Activated CD4-positive, alpha-beta T cell treated with anti-CD3 and anti-CD28 coated beads for 36 hours (primary cell): ENCODE measurements at regions of chr2 and their contacts with region 1.

Region 1: DNA sequence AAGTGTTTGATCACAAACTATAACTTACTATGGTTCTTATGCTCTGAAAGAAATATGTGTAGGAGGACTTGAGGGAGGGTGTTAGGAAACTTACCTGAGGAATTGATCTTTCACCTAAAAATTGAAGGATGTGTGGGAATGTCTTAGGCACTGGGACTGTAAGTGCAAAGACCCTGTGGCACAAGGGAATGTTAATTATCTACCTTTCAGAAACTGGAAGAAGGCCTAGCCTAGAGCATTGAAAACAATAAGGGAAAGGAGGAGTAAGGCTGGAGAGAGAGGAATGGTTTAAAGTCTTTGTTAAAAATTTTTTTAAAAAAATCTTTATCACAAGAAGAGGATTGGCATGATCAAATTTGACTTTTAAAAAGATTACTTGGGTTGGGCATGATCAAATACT is 7.9 kb downstream of the AFTPH start:
- DNase-seq: no peak
- ATAC-seq: no peak
- H3K4me3 Mint-ChIP-seq: no peak overlapping the region
- H3K27ac Mint-ChIP-seq: no peak overlapping the region
- H3K4me1 Mint-ChIP-seq: peaks cover 67% of the 10 kb centered on the region
- H3K27me3 Mint-ChIP-seq: no peaks in the 10 kb centered on the region

Region 2: GRCh38 chr2:64482765-64483504 is 49.1 kb before region 1 on chr2:
- CTCF ChIA-PET with region 1: interaction called, 3 read pairs
- POLR2A ChIA-PET with region 1: interaction called, 12 read pairs
- intact Hi-C with region 1: no loop called
- DNase-seq: peak; percentile 20
- ATAC-seq: no peak
- H3K4me3 Mint-ChIP-seq: no peak overlapping the region
- H3K27ac Mint-ChIP-seq: no peak overlapping the region
- H3K4me1 Mint-ChIP-seq: peaks cover 12% of the 10 kb centered on the region
- H3K27me3 Mint-ChIP-seq: no peaks in the 10 kb centered on the region

Region 3: GRCh38 chr2:64504774-64505720 is 27.0 kb before region 1 on chr2:
- CTCF ChIA-PET with region 1: no interaction called
- POLR2A ChIA-PET with region 1: no interaction called
- intact Hi-C with region 1: no loop called
- DNase-seq: no peak
- ATAC-seq: no peak
- H3K4me3 Mint-ChIP-seq: no peak overlapping the region
- H3K27ac Mint-ChIP-seq: no peak overlapping the region
- H3K4me1 Mint-ChIP-seq: no peaks in the 10 kb centered on the region
- H3K27me3 Mint-ChIP-seq: peaks cover 5% of the 10 kb centered on the region